ENCODE measurements at regions of chr12 and their contacts with region 1.

Region 1: DNA sequence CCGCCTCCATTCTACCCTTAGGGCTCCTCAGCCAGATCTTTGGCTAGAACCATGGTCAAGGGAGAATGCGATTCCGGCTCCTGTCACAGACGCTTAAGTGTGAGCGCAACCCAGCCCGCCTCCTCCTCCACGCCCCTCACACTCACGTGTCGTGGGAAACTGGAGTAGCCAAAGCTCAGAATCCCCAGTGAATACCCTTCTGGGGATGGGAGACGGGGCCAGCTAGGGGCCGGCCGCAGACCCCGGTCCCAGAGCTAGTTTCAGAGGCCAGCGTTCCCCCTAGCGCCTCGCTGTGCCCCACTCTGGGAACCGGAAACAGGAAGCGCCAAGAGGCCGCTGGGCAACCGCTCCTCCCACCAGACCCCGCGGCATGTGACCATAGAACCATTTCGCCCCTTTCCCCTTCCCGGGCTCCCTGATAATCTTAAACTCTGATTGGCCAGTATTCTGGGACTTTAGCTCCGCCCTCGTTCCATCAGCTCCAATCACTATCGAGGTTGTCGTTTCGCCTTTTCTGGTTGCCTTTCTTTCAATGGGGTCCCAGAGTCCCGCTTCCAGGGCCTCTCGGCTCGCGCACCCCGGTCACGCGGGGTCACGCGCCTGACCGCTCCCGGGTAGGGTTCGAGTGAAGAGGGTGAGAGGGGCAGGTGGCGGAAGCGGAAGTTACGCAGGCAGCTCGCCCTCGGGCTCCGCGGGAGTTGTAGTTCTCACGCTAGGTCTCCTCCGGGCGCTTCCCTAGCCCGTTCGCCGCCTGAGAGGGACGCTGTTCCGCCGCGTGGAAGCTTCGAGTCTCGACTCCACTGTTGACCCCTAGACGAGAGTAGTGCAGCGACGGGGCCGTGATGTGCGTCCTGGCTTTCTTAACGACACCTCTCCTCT is at the start of gene M6PR:
- DNase-seq: peak; percentile 97
- ATAC-seq: peak; percentile 83
- H3K4me3 Mint-ChIP-seq: peak within 1 kb of the TSS; percentile 94
- H3K27ac Mint-ChIP-seq: peak within 1 kb of the TSS; percentile 90
- H3K4me1 Mint-ChIP-seq: peaks cover 55% of the 10 kb centered on the region
- H3K27me3 Mint-ChIP-seq: no peaks in the 10 kb centered on the region
- CTCF ChIP-seq: peak; percentile 43
- total RNA-seq, gene M6PR: 199 to 206 TPM

Region 2: GRCh38 chr12:8914716-8915526 is 34.7 kb before region 1 on chr12:
- CTCF ChIA-PET with region 1: interaction called, 29 read pairs
- POLR2A ChIA-PET with region 1: interaction called, 4 read pairs
- intact Hi-C with region 1: loop called (anchors 2 kb)
- DNase-seq: peak; percentile 68
- ATAC-seq: peak; percentile 85
- H3K4me3 Mint-ChIP-seq: no peak overlapping the region
- H3K27ac Mint-ChIP-seq: no peak overlapping the region
- H3K4me1 Mint-ChIP-seq: peaks cover 14% of the 10 kb centered on the region
- H3K27me3 Mint-ChIP-seq: no peaks in the 10 kb centered on the region
- CTCF ChIP-seq: no peak

Region 3: GRCh38 chr12:8991371-8992345 is 42.1 kb after region 1 on chr12:
- CTCF ChIA-PET with region 1: interaction called, 18 read pairs
- POLR2A ChIA-PET with region 1: interaction called, 5 read pairs
- intact Hi-C with region 1: loop called (anchors 5 kb)
- DNase-seq: no peak
- ATAC-seq: peak; percentile 22
- H3K4me3 Mint-ChIP-seq: peak overlapping the region; percentile 74
- H3K27ac Mint-ChIP-seq: peak overlapping the region; percentile 81
- H3K4me1 Mint-ChIP-seq: peaks cover 63% of the 10 kb centered on the region
- H3K27me3 Mint-ChIP-seq: no peaks in the 10 kb centered on the region
- CTCF ChIP-seq: no peak

Region 4: DNA sequence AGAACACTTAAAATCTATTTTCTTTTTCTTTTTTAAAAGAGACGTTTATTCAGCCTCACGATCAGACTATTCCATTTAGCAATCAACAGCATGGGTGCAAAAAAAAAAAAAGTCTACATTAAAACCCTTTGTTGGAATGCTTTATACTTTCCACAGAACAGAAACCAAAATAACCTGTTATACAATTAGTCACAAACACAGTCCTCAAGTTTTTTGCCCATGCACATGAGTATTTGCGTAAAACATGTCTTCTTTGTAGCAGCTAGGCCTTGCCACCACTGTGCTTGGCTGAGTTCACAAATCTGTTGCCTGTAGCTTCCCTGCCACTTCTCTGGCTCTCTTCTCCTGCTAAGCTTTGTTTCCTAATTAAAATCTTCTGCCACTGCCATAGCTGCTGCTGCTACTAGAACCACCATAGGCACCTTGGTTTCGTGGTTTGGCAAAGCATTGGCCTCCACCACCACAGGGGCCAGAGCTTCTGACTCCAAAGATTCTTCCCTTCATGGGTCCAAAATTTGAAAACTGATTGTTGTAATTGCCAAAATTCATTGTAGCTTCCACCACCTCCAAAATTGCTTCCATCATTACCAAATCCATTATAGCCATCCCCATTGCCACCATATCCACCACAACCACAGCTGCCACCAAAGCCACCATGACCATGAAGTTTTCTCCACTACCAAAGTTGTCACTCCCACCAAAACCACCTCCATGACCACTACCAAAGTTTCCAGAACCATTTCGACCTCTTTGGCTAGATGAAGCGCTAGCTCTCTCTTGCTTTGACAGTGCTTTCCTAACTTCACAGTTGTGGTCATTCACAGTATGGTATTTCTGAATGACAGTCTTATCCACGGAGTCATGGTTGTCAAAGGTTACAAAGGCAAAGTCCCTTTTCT is 77.8 kb after region 1 on chr12:
- CTCF ChIA-PET with region 1: interaction called, 41 read pairs
- POLR2A ChIA-PET with region 1: interaction called, 30 read pairs
- intact Hi-C with region 1: loop called (anchors 1 kb)
- DNase-seq: peak; percentile 76
- ATAC-seq: no peak
- H3K4me3 Mint-ChIP-seq: peak overlapping the region; percentile 60
- H3K27ac Mint-ChIP-seq: peak overlapping the region; percentile 94
- H3K4me1 Mint-ChIP-seq: peaks cover 40% of the 10 kb centered on the region
- H3K27me3 Mint-ChIP-seq: peaks cover 2% of the 10 kb centered on the region
- CTCF ChIP-seq: no peak

Region 5: DNA sequence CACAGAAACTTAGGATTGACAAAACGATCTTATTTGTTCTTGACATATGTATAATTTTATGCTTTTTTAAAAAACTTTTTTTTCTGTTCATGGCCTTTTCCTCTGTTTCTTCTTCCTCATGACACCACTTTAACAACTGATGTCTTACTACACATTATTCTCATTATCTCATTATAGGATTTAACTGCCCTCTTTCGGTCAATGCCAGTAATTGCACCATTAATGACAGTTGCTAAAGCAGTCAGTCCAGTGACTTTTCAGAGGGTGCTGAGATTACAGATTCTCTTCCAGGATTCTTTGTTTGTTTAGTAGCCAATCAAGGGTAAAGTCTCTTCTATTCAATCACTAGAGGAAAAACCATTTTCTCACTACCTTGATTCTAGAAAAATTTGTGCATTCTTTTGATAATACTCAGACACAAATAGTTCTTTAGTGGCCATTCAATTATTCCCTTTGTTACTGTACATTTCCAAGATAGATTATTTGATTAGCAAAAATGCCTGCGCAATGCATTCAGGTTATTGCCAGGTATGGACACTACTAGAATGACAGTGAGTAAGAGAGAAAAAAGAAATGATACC is 89.9 kb after region 1 on chr12:
- CTCF ChIA-PET with region 1: interaction called, 173 read pairs
- POLR2A ChIA-PET with region 1: interaction called, 30 read pairs
- intact Hi-C with region 1: loop called (anchors 1 kb)
- DNase-seq: no peak
- ATAC-seq: peak; percentile 87
- H3K4me3 Mint-ChIP-seq: no peak overlapping the region
- H3K27ac Mint-ChIP-seq: peak overlapping the region; percentile 53
- H3K4me1 Mint-ChIP-seq: peaks cover 52% of the 10 kb centered on the region
- H3K27me3 Mint-ChIP-seq: no peaks in the 10 kb centered on the region
- CTCF ChIP-seq: peak; percentile 89